ENCODE measurements at regions of chr10 and their contacts with region 1.

Region 1: DNA sequence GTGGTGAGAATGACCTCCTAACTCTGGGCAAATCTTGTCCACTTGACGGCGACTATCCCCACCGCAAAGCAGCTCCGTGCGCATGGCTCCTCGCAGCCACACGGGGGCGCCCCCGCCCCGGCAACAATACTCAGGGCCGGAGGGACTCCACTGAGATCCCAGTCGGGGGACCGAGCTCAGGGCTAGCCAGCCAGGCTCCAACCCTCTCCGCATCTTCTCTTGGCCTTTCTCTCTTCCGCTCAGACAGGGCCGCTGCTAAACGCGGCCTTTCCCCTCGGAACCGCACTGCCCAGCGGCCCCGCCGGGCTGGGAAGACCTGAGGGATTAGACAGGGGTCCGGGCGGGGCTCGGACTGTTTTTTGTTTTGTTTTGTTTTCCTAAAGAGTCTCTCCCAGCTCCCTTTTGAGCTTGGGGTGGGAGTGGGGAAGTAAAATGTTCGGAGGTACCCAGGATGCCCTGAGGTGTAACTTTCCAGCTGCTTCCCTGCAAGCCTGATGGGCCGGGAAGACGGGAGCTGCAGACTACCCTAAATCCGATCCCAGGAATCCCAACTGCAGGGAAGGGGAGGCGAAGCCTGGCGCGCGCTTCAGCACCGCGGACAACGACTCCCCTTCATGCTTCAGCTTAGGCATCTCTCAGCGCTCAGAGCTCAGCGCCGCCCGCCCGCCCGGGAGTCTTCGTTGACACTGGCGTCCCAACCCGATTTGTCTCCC is 2.7 kb downstream of the KCNIP2 start:
- DNase-seq: peak; percentile 78
- H3K4me3 ChIP-seq: peak overlapping the region; percentile 72
- H3K27ac ChIP-seq: peak overlapping the region; percentile 72
- H3K4me1 ChIP-seq: peaks cover 87% of the 10 kb centered on the region
- H3K27me3 ChIP-seq: no peaks in the 10 kb centered on the region
- CTCF ChIP-seq: peak; percentile 94

Region 2: DNA sequence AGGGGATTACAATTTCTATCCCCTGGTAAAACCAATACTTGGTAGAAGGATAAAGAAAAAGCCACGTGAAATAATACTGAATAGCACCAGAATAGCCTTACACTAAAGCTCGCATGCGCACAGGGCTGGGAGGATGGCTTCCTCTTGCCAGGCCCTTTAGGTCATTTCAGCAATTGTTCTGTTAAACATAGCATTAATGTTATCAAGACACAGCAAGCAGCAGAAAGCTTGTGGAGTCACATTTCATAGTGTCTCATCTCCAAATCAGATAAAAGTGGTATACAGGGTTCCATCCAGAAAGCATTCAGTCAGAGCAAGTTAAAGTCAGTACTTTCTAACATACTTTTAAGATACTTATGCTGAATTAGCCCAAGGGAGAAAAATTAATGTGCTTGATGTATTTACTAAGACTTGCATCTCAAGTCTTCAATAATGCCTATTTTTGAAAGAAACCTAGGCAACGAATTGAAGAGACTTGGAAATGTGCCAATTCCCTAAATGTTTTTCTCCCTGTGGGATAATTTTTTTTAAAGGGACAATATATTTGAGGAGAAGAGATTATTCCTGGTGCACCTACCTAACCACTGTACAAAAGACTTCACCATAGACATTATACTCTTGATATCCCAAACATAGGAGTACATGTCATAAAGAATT is 43.4 kb before region 1 on chr10:
- intact Hi-C with region 1: no loop called
- DNase-seq: no peak
- H3K4me3 ChIP-seq: no peak overlapping the region
- H3K27ac ChIP-seq: no peak overlapping the region
- H3K4me1 ChIP-seq: peaks cover 45% of the 10 kb centered on the region
- H3K27me3 ChIP-seq: no peaks in the 10 kb centered on the region
- CTCF ChIP-seq: no peak

Region 3: GRCh38 chr10:101941871-101942270 is 101.0 kb after region 1 on chr10:
- intact Hi-C with region 1: no loop called
- DNase-seq: no peak
- H3K4me3 ChIP-seq: no peak overlapping the region
- H3K27ac ChIP-seq: peak overlapping the region; percentile 86
- H3K4me1 ChIP-seq: peaks cover 61% of the 10 kb centered on the region
- H3K27me3 ChIP-seq: no peaks in the 10 kb centered on the region
- CTCF ChIP-seq: no peak

Region 4: GRCh38 chr10:102009801-102010425 is 169.0 kb after region 1 on chr10:
- intact Hi-C with region 1: loop called (anchors 10 kb)
- DNase-seq: no peak
- H3K4me3 ChIP-seq: no peak overlapping the region
- H3K27ac ChIP-seq: no peak overlapping the region
- H3K4me1 ChIP-seq: peaks cover 5% of the 10 kb centered on the region
- H3K27me3 ChIP-seq: no peaks in the 10 kb centered on the region
- CTCF ChIP-seq: peak; percentile 90

Measured in left ventricle myocardium inferior (tissue), 1 donor.